ENCODE measurements at regions of chr17 and their contacts with region 1.

Region 1: DNA sequence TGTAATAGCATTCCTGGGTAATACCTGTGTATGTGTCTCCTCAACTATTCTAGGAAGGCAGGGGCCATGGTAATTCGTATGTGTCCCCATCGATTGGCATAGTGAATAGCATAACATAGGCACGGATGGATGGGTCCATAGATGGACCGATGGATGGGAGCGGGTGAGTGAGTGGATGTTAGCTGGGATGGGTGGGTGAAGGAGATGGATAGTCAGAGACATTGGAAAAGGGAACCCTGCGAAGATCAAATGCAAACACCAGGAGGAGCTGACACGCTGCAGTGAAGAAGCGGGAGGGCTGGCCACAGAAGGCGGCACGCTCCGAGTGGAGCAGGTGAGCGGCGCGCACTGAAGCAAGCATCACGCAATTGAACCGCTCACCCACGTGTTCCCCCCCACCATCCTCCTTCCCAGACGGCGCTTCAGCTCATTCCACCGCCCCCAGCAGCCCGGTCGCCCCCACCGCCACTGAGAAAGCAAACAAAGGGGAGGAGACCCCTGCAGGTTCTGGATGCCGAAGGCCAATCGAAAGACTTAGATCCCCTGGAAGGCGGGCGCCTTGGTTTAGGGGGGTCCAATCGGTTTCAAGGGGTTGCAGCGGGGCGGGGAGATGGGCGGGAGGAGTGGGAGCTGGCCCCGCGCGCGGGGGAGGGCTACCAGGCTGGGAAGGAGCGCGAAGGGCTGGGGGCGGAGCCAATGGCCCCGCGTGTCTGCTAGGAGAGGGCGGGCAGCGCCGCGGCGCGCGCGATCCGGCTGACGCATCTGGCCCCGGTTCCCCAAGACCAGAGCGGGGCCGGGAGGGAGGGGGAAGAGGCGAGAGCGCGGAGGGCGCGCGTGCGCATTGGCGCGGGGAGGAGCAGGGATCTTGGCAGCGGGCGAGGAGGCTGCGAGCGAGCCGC is at the start of gene ARRB2:
- DNase-seq: peak; percentile 99
- H3K4me3 Mint-ChIP-seq: peak within 1 kb of the TSS; percentile 96
- H3K27ac Mint-ChIP-seq: peak within 1 kb of the TSS; percentile 99
- H3K4me1 Mint-ChIP-seq: peaks cover 51% of the 10 kb centered on the region
- H3K27me3 Mint-ChIP-seq: no peaks in the 10 kb centered on the region
- total RNA-seq, gene ARRB2: 189 and 193 TPM in 2 replicates

Region 2: DNA sequence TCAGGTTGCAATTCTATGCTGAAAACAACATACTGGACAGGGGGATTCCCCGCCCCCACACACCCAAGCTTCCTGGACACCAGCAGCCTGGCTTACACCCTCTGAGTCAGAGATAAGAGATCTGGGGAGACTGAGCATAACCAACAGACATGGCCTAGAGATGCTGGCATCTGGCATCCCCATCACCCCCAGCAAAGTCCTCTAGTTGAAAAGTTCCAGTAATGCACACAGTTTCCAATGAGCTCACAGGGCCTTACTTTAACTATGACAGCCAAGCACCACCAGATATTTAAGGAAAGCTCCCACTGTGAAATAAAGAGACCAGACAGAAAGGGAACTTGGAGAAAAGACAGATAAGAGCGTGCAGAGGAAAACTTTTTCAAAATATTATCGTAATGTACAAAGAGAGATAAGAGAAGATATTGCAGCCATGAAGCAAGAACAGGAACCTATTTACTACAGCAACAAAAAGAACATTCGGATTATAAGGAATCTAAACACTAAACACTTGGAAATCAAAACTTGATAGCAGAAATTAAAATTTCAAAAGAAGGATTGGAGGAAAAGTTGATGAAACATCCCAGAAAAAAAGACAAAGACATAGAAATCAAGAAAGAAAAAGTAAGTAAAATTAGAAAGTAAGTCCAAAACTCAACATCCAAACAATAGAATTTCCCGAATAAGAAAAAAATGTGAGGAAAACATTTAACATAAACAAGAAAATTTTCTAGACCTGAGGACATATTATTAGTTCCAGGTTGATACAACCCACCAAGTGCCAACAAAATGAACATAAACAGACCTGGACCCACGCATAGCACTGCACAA is 51.4 kb before region 1 on chr17:
- intact Hi-C with region 1: no loop called
- DNase-seq: peak; percentile 77
- H3K4me3 Mint-ChIP-seq: peak overlapping the region; percentile 14
- H3K27ac Mint-ChIP-seq: peak overlapping the region; percentile 57
- H3K4me1 Mint-ChIP-seq: peaks cover 19% of the 10 kb centered on the region
- H3K27me3 Mint-ChIP-seq: peaks cover 3% of the 10 kb centered on the region

Region 3: GRCh38 chr17:4733073-4733531 is 23.1 kb after region 1 on chr17:
- intact Hi-C with region 1: loop called (anchors 1 kb)
- DNase-seq: peak; percentile 77
- H3K4me3 Mint-ChIP-seq: peak overlapping the region; percentile 45
- H3K27ac Mint-ChIP-seq: peak overlapping the region; percentile 66
- H3K4me1 Mint-ChIP-seq: peaks cover 38% of the 10 kb centered on the region
- H3K27me3 Mint-ChIP-seq: peaks cover 5% of the 10 kb centered on the region

Region 4: DNA sequence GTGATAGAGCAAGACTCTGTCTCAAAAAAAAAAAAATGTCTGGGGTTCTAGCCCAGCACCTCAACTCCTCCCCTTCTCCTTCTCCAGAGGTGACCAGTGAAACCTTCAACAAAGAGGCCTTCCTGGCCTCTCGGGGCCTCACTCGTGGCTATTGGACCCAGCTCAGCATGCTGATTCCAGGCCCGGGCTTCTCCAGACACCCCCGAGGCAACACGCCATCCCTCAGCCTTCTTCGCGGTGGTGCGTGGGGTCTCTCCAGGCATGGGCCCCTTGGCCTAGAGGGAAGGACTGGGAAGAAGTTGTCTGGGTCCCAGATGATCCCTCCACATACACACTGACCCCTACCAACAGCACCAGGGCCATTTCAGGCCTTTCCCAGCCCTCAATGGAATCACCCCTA is 33.2 kb after region 1 on chr17:
- intact Hi-C with region 1: no loop called
- DNase-seq: no peak
- H3K4me3 Mint-ChIP-seq: no peak overlapping the region
- H3K27ac Mint-ChIP-seq: no peak overlapping the region
- H3K4me1 Mint-ChIP-seq: peaks cover 22% of the 10 kb centered on the region
- H3K27me3 Mint-ChIP-seq: peaks cover 39% of the 10 kb centered on the region

Region 5: DNA sequence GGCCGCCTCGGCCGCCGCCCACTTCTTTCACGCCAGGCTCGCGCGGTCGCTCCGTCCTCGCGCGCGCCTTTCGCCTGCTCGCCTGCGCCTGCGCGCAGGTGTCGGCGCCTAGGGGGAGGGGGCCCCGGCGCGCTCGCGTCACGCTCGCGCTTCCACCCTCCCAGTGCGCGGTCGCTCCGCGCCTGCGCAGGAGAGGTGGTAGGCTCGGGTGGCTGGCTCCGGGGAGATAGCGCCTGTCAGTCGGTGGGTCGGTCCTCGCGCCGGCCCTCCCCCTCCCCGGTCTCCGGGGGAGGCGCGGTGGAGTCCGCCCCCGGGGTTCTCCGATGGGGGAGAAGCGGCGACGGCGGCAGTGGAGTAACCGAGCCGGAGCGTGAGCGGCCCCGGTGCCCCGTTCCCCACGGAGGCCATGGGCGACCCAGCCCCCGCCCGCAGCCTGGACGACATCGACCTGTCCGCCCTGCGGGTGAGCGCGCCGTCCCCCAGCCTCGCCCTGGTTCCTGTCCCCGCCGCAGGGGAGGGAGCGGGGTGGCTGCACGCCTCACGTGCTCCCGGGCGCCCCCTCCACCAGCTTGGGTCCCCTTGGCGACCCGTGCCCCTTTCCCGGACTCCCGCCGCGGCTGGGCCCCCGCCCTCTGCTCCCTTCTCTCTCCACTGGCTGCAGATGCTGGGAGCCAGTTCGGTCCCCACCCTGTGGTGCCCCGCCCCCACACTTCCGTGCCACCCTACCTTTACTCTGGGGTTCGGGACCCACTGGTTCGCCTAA is 123.3 kb after region 1 on chr17 and contains the start of gene MINK1:
- intact Hi-C with region 1: loop called (anchors 1 kb)
- DNase-seq: peak; percentile 97
- H3K4me3 Mint-ChIP-seq: peak within 1 kb of the TSS; percentile 90
- H3K27ac Mint-ChIP-seq: peak within 1 kb of the TSS; percentile 95
- H3K4me1 Mint-ChIP-seq: peaks cover 33% of the 10 kb centered on the region
- H3K27me3 Mint-ChIP-seq: peaks cover 2% of the 10 kb centered on the region
- total RNA-seq, gene MINK1: 56.1 and 59.7 TPM in 2 replicates

Region 6: DNA sequence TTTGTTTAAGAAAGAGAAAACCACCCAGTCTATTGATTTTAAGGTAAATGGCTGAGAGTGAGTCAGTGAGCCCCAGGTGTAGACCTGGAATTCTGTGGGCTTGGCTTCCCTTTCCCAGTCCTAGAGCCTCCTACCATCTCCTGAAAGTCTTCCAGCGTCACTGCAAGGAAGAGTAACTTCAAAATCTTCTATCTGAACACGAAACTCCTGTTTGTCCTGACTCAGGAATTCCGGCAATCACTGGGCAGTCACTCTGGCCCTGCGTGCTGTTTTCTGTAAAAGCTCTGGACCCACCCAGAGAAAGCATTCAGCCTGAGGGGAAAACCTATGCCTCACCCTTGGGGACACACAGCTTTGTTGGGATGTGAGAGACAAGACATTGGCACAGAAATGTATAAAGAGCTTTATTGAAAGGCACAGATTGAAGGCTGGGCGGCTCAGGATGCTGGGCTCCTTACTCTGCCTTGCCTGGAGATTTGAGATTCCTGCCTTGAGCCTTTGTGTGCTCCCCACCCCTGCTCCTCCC is 139.0 kb after region 1 on chr17:
- intact Hi-C with region 1: no loop called
- DNase-seq: no peak
- H3K4me3 Mint-ChIP-seq: no peak overlapping the region
- H3K27ac Mint-ChIP-seq: no peak overlapping the region
- H3K4me1 Mint-ChIP-seq: peaks cover 30% of the 10 kb centered on the region
- H3K27me3 Mint-ChIP-seq: no peaks in the 10 kb centered on the region

Region 7: GRCh38 chr17:4891411-4892342 is 181.6 kb after region 1 on chr17:
- intact Hi-C with region 1: loop called (anchors 1 kb)
- DNase-seq: no peak
- H3K4me3 Mint-ChIP-seq: no peak overlapping the region
- H3K27ac Mint-ChIP-seq: no peak overlapping the region
- H3K4me1 Mint-ChIP-seq: no peaks in the 10 kb centered on the region
- H3K27me3 Mint-ChIP-seq: no peaks in the 10 kb centered on the region

Region 8: GRCh38 chr17:4948931-4949320 is 238.9 kb after region 1 on chr17:
- intact Hi-C with region 1: loop called (anchors 1 kb)
- DNase-seq: peak; percentile 94
- H3K4me3 Mint-ChIP-seq: peak overlapping the region; percentile 95
- H3K27ac Mint-ChIP-seq: peak overlapping the region; percentile 99
- H3K4me1 Mint-ChIP-seq: peaks cover 44% of the 10 kb centered on the region
- H3K27me3 Mint-ChIP-seq: no peaks in the 10 kb centered on the region

Measured in activated CD4-positive, alpha-beta T cell treated with anti-CD3 and anti-CD28 coated beads, Interleukin-2, amount 10 ng/mL, durations not matched to agents 24 days and 14 days (primary cell).